CD8-positive, alpha-beta T cell (primary cell): ENCODE measurements at regions of chr9 and their contacts with region 1.

Region 1: DNA sequence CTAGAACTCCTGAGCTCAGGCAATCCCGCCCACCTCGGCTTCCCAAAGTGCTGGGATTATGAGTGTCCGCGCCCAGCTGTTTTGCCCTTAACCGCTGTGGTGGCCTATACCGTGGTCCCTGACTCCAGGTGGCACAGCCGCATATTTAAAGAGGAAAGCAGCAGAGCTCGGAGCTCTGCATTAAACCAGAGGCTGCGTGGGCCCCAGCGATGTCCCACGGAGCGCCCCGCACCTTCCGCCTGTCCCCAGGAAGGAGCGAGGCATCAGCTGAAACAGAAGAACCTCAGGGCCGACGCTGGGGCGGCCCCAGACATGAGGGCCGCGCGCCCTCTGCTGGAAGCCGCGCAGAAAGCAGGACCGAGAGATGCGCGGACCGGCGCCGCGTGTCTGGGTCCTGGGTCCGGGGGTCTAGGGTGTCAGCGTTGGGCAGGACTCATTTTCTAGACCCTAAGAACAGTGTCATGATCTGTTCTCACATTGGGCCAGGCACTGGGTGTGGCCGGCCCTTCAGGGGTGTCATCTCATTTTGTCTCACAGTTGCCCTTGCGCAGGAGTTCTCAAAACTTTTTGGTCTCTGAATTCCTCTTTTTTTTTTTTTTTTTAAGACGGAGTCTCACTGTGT is 37.7 kb downstream of the LAMC3 start:
- DNase-seq: peak; percentile 51 to 80 (median 70)
- ATAC-seq: peak; percentile 91
- H3K4me3 ChIP-seq: no peak overlapping the region
- H3K4me3 Mint-ChIP-seq: no peak overlapping the region
- H3K27ac ChIP-seq: no peak overlapping the region
- H3K27ac Mint-ChIP-seq: no peak overlapping the region
- H3K4me1 ChIP-seq: peaks cover 11% of the 10 kb centered on the region
- H3K4me1 Mint-ChIP-seq: peaks cover 15% of the 10 kb centered on the region
- H3K27me3 ChIP-seq: peaks cover 0 to 3% of the 10 kb centered on the region in 2 experiments
- H3K27me3 Mint-ChIP-seq: peaks cover 9% of the 10 kb centered on the region
- CTCF ChIP-seq: peak; percentile 94

Region 2: GRCh38 chr9:130461218-130461630 is 585.5 kb before region 1 on chr9:
- CTCF ChIA-PET with region 1: no interaction called
- POLR2A ChIA-PET with region 1: interaction called, 3 read pairs
- intact Hi-C with region 1: loop called (anchors 2 to 5 kb)
- DNase-seq: peak; percentile 48 to 86 (median 71)
- ATAC-seq: peak; percentile 65
- H3K4me3 ChIP-seq: no peak overlapping the region
- H3K4me3 Mint-ChIP-seq: no peak overlapping the region
- H3K27ac ChIP-seq: no peak overlapping the region
- H3K27ac Mint-ChIP-seq: no peak overlapping the region
- H3K4me1 ChIP-seq: no peaks in the 10 kb centered on the region
- H3K4me1 Mint-ChIP-seq: no peaks in the 10 kb centered on the region
- H3K27me3 ChIP-seq: no peaks in the 10 kb centered on the region
- H3K27me3 Mint-ChIP-seq: peaks cover 24% of the 10 kb centered on the region
- CTCF ChIP-seq: peak; percentile 82

Region 3: GRCh38 chr9:130707225-130707976 is 339.3 kb before region 1 on chr9:
- CTCF ChIA-PET with region 1: interaction called, 10 read pairs
- POLR2A ChIA-PET with region 1: no interaction called
- intact Hi-C with region 1: no loop called
- DNase-seq: peak; percentile 18 to 83 (median 77)
- ATAC-seq: peak; percentile 48
- H3K4me3 ChIP-seq: no peak overlapping the region
- H3K4me3 Mint-ChIP-seq: no peak overlapping the region
- H3K27ac ChIP-seq: no peak overlapping the region
- H3K27ac Mint-ChIP-seq: no peak overlapping the region
- H3K4me1 ChIP-seq: no peaks in the 10 kb centered on the region
- H3K4me1 Mint-ChIP-seq: peaks cover 3% of the 10 kb centered on the region
- H3K27me3 ChIP-seq: no peaks in the 10 kb centered on the region
- H3K27me3 Mint-ChIP-seq: no peaks in the 10 kb centered on the region
- CTCF ChIP-seq: peak; percentile 93

Region 4: DNA sequence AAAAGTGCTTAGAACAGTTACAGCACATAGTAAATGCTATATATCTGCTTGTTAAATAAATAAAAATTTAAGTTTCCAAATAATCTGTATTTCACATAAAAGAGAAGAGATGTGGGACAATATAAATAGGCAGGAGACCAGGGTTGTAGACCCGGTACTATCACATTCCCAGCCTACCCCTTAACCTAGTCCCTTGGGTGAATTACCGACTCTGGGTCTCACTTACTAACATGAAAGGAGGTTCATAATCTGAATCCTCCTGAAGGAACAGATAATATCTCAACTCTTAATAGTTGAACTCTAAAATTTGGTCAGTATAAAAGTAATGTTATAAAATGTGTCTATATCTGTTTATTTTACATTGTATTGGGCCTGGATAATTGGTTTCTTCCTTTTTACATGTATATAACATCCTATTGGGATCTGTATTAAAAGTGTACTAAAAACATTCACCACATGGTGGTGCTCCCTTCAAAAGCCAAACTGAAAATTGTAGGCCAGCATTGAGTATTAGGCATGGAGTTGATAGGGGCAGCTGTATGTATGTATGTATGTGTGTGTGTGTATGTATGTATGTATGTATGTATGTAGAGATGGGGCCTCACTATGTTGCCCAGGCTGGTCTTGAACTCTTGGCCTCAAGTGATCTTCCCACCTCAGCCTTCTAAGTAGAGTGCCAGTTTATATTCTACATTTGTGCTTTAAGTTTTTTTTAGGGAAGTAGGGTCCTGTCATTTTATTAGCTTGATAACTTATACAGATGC is 275.8 kb before region 1 on chr9:
- CTCF ChIA-PET with region 1: interaction called, 7 read pairs
- POLR2A ChIA-PET with region 1: no interaction called
- intact Hi-C with region 1: loop called in 1 of 2 experiments (anchors 5 kb)
- DNase-seq: peak in 2 of 9 experiments; percentile 53 to 63
- ATAC-seq: peak; percentile 77
- H3K4me3 ChIP-seq: no peak overlapping the region
- H3K4me3 Mint-ChIP-seq: no peak overlapping the region
- H3K27ac ChIP-seq: no peak overlapping the region
- H3K27ac Mint-ChIP-seq: no peak overlapping the region
- H3K4me1 ChIP-seq: peaks cover 12% of the 10 kb centered on the region
- H3K4me1 Mint-ChIP-seq: peaks cover 47% of the 10 kb centered on the region
- H3K27me3 ChIP-seq: no peaks in the 10 kb centered on the region
- H3K27me3 Mint-ChIP-seq: no peaks in the 10 kb centered on the region
- CTCF ChIP-seq: peak; percentile 70

Region 5: DNA sequence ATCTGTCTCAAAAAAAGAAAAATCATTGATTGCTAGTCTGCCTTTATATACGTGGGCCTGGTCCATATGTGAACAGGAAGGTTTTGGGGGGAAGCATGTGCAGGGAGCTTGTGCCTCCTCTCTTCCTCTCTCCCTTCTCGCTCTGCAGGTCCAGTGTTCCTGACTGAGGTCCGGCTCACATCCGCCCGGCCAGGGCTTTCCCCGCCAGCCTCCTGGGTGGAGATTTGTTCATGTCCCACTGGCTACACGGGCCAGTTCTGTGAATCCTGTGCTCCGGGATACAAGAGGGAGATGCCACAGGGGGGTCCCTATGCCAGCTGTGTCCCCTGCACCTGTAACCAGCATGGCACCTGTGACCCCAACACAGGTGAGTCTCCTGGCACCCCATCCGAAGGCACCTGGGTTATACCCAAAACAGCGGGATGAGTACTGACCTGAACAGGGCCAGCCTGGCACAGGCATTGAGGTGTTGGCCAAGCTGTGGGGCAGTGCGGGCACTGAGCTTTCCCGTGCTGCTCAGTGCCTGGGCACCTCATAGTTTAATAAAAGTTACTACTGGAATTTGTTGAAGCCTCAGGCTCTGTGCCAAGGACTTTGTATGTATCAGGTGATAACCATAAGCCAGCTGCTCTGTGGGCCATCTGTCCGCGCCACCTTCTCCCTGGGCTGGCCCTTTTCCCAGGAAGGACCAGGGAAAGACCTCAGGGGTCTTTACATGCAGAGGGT is 10.3 kb after region 1 on chr9:
- CTCF ChIA-PET with region 1: interaction called, 25 read pairs
- POLR2A ChIA-PET with region 1: no interaction called
- intact Hi-C with region 1: no loop called
- DNase-seq: no peak
- ATAC-seq: no peak
- H3K4me3 ChIP-seq: no peak overlapping the region
- H3K4me3 Mint-ChIP-seq: no peak overlapping the region
- H3K27ac ChIP-seq: no peak overlapping the region
- H3K27ac Mint-ChIP-seq: no peak overlapping the region
- H3K4me1 ChIP-seq: no peaks in the 10 kb centered on the region
- H3K4me1 Mint-ChIP-seq: no peaks in the 10 kb centered on the region
- H3K27me3 ChIP-seq: peaks cover 0 to 3% of the 10 kb centered on the region in 2 experiments
- H3K27me3 Mint-ChIP-seq: no peaks in the 10 kb centered on the region
- CTCF ChIP-seq: no peak